Activated naive CD8-positive, alpha-beta T cell treated with anti-CD3 and anti-CD28 coated beads, Interleukin-2, amount 10 ng/mL, durations not matched to agents 7 days and 5 days (primary cell): ENCODE measurements at regions of chr14 and their contacts with region 1.

Region 1: DNA sequence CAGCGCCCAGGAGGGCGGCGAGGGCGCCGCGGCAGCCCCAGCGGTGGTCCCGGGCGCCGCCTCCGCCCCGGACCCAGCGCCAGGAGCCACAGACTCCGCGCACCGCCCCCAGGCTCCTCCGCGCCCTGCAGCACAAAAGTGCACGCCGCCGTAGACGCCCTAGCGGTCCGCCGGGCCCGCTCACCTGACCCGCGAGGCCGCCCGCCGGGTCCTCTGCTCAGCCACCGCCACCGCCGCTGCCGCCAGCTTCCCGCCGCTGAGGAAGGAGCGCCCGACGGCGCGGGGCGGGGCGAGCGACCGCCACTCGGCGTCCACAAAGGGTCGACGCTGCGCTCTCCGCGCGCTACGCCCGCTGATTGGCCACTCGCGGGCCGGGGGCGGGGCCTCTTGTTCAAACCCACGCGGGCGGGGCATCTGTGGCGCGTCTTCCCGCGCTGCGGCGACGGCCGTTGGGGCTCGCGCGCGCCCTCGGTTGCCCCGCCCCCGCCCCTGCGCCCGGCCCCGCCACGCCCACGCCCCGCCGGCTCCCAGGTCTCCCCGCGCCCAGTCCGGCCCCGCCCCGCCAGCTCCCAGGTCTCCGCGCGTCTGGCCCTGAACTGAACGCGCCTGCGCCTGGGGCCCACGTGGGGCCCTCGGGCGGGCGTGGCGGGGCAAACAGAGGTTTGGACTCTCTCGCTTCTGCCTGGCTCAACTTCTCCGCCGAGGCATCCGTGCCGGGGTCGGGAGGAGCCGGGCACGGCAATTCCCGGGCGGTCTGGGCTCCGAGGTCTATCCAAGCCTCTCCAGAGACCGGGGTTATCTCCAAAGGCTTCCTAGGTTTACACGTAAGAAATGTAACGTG is at the start of gene CDCA4:
- DNase-seq: peak; percentile 99
- ATAC-seq: peak; percentile 90
- H3K4me3 Mint-ChIP-seq: peak within 1 kb of the TSS; percentile 93
- H3K27ac Mint-ChIP-seq: peak within 1 kb of the TSS; percentile 85
- H3K4me1 Mint-ChIP-seq: peaks cover 32% of the 10 kb centered on the region
- H3K27me3 Mint-ChIP-seq: no peaks in the 10 kb centered on the region
- total RNA-seq, gene CDCA4: 51.7 to 53.3 TPM

Region 2: GRCh38 chr14:104893435-104894207 is 127.4 kb before region 1 on chr14:
- POLR2A ChIA-PET with region 1: no interaction called
- DNase-seq: no peak
- ATAC-seq: no peak
- H3K4me3 Mint-ChIP-seq: no peak overlapping the region
- H3K27ac Mint-ChIP-seq: no peak overlapping the region
- H3K4me1 Mint-ChIP-seq: peaks cover 1% of the 10 kb centered on the region
- H3K27me3 Mint-ChIP-seq: no peaks in the 10 kb centered on the region

Region 3: GRCh38 chr14:104970231-104971101 is 50.6 kb before region 1 on chr14:
- POLR2A ChIA-PET with region 1: no interaction called
- DNase-seq: no peak
- ATAC-seq: no peak
- H3K4me3 Mint-ChIP-seq: no peak overlapping the region
- H3K27ac Mint-ChIP-seq: no peak overlapping the region
- H3K4me1 Mint-ChIP-seq: no peaks in the 10 kb centered on the region
- H3K27me3 Mint-ChIP-seq: peaks cover 21% of the 10 kb centered on the region

Region 4: GRCh38 chr14:104985675-104986525 is 35.1 kb before region 1 on chr14 and contains the start of gene CLBA1:
- POLR2A ChIA-PET with region 1: interaction called, 19 read pairs
- DNase-seq: peak; percentile 93
- ATAC-seq: peak; percentile 92
- H3K4me3 Mint-ChIP-seq: peak within 1 kb of the TSS; percentile 63
- H3K27ac Mint-ChIP-seq: peak within 1 kb of the TSS; percentile 82
- H3K4me1 Mint-ChIP-seq: no peaks in the 10 kb centered on the region
- H3K27me3 Mint-ChIP-seq: peaks cover 2% of the 10 kb centered on the region
- total RNA-seq, gene CLBA1: 1.2 TPM

Region 5: GRCh38 chr14:105045710-105046326 is 24.8 kb after region 1 on chr14:
- POLR2A ChIA-PET with region 1: interaction called, 24 read pairs
- DNase-seq: peak; percentile 97
- ATAC-seq: peak; percentile 85
- H3K4me3 Mint-ChIP-seq: peak overlapping the region; percentile 25
- H3K27ac Mint-ChIP-seq: peak overlapping the region; percentile 15
- H3K4me1 Mint-ChIP-seq: peaks cover 14% of the 10 kb centered on the region
- H3K27me3 Mint-ChIP-seq: peaks cover 5% of the 10 kb centered on the region

Region 6: DNA sequence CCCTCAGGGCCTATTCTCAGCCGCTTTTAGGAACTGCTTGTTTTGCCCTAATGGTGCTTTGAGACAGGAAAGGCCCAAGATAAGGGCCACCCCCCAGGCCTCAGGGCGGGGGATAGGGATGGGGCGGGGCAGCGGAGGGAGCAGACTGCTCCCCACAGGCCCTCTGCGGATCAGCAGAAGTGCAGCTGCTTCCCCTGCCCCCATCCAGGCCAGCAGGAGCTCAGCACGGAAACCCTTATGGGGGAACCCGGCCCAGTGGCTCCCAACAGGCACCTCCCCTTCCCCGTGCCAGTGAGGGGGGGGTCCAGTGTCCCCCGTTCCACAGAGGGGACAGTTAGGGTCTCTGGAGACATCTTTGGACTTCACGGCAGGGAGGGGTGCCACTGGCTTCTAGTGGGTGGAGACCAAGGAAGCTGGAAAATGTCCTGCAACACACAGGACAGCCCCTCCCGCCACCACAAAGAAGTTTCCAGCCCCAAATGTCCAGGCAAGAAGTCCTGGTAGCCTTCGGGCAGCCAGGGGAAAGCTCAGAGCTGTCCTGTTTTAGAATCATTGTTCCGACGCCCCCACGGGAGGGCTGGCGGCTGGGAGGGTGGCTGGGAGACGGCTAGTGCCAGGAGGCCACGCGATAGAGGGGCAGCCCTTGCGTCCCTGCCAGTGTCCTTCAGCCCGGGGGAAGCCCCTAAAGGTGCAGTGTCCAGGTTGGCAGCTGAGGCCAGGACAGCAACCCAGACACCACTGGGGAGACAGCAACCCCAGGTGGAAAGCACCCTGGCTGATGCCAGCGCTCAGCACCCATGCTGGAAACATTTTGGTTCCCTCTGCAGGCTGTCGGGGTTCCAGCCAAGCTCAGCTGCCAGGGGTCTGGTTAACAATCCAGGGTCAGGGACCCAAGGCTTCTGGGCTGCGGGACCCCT is 54.6 kb after region 1 on chr14:
- POLR2A ChIA-PET with region 1: interaction called, 11 read pairs
- DNase-seq: peak; percentile 72
- ATAC-seq: peak; percentile 85
- H3K4me3 Mint-ChIP-seq: peak overlapping the region; percentile 68
- H3K27ac Mint-ChIP-seq: peak overlapping the region; percentile 72
- H3K4me1 Mint-ChIP-seq: peaks cover 17% of the 10 kb centered on the region
- H3K27me3 Mint-ChIP-seq: peaks cover 8% of the 10 kb centered on the region